OCI-LY7 (cell line): ENCODE measurements at regions of chr14 and their contacts with region 1.

Region 1: DNA sequence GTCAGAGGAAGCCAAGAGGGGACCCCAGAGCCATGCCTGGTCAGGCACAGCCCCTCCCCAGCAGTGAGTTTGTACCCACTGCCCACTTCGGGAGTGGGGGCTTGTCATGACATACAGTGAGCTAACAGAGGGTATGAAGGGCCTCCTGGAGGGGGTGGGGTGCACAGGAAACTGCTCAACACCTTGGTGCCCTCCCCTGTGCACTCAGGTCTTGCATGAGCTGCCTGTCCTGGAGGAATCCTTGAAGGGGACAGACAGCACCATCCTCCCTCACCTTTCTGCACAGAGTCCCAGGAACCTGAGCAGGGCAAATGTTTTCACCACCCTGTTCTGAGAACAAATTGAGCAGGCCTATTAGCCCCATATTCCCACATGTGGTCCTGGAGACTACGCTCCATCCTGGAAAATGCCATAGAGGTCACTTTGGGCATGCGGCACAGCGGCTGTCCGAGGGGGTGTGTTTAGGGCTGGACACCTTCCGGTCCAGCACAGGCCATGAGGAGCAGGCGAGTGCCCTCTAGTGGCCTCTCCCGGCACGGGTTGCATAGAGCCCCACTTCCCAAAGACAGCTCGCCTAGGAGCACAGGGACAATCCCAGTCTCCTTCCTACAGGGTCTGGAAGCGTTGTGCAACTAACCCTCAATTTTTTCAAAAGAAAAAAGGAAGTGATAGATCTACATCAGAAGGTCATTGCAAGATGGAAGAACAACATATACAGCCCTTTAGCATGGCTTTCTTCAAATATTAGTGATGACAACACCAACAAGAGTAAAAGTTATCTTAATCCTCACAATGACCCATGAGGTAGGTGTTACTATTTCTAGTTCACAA is 31.9 kb upstream of the ZFP36L1 start:
- DNase-seq: peak; percentile 65
- H3K4me3 ChIP-seq: no peak overlapping the region
- H3K27ac ChIP-seq: no peak overlapping the region
- H3K4me1 ChIP-seq: peaks cover 45% of the 10 kb centered on the region
- CTCF ChIP-seq: peak; percentile 99

Region 2: GRCh38 chr14:67837011-67837624 is 987.6 kb before region 1 on chr14:
- CTCF ChIA-PET with region 1: no interaction called
- POLR2A ChIA-PET with region 1: no interaction called
- intact Hi-C with region 1: loop called (anchors 10 kb)
- DNase-seq: peak; percentile 79
- H3K4me3 ChIP-seq: no peak overlapping the region
- H3K27ac ChIP-seq: no peak overlapping the region
- H3K4me1 ChIP-seq: no peaks in the 10 kb centered on the region
- CTCF ChIP-seq: peak; percentile 90

Region 3: DNA sequence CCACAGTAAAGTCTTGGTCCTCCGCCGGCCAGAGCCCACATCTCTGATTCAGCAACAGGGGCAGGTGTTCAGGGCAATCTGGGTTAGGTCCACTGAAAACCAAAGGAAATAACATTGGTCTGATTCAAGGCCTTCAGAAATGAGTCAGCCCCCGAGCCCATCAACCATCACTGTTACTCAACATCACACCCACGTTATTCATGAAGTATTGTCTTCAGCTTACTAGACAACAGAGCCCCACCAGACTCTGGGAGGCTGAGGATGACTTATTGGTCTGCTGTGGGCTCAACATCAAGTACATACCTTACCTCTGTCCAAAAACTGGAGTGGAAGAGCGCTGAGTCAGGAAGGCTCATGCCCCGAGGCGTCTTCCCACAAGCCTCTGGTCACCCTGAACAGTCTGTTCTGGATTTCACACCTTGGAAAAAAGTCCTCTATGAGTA is 129.4 kb before region 1 on chr14:
- CTCF ChIA-PET with region 1: no interaction called
- POLR2A ChIA-PET with region 1: no interaction called
- intact Hi-C with region 1: no loop called
- DNase-seq: no peak
- H3K4me3 ChIP-seq: no peak overlapping the region
- H3K27ac ChIP-seq: no peak overlapping the region
- H3K4me1 ChIP-seq: peaks cover 20% of the 10 kb centered on the region
- CTCF ChIP-seq: no peak

Region 4: DNA sequence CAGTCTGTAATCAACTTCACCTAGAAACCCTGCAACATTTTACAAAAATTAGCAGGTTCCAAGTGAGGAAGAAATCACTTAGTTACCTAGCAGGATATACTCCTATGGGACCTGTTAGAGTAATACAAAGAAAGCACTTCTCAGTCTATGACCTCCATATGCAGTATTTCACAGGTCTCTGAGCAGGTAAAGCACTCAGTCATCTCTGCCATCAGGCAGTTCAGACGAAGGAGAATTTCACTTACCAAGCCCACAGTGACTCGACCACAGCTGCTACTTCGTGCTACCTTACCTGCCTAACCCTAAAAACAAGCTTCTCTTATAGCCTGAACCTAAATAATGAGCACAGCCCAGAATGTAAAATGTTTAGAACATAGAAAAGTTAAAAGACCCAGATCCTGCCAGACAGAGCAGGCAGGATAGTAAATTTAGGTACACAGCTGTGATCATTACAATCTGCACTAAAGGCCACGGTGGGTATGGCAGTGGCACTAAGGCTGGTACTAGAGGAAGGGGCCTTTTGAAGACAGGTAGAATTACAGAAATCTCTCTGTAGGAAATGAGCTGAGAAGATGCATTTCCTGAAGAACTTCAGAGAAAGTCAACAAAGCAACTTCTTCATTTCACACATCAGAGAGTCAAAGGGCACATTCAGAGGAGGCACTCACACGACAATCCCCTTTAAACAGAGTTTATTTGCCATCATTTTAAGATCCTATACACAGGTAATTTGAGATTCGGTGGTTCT is 292.5 kb after region 1 on chr14:
- CTCF ChIA-PET with region 1: no interaction called
- POLR2A ChIA-PET with region 1: no interaction called
- intact Hi-C with region 1: no loop called
- DNase-seq: no peak
- H3K4me3 ChIP-seq: no peak overlapping the region
- H3K27ac ChIP-seq: no peak overlapping the region
- H3K4me1 ChIP-seq: peaks cover 5% of the 10 kb centered on the region
- CTCF ChIP-seq: no peak